Activated CD4-positive, alpha-beta memory T cell treated with anti-CD3 and anti-CD28 coated beads, Interleukin-2, amount 10 ng/mL, durations not matched to agents 7 days and 5 days (primary cell): ENCODE measurements at regions of chr14 and their contacts with region 1.

Region 1: DNA sequence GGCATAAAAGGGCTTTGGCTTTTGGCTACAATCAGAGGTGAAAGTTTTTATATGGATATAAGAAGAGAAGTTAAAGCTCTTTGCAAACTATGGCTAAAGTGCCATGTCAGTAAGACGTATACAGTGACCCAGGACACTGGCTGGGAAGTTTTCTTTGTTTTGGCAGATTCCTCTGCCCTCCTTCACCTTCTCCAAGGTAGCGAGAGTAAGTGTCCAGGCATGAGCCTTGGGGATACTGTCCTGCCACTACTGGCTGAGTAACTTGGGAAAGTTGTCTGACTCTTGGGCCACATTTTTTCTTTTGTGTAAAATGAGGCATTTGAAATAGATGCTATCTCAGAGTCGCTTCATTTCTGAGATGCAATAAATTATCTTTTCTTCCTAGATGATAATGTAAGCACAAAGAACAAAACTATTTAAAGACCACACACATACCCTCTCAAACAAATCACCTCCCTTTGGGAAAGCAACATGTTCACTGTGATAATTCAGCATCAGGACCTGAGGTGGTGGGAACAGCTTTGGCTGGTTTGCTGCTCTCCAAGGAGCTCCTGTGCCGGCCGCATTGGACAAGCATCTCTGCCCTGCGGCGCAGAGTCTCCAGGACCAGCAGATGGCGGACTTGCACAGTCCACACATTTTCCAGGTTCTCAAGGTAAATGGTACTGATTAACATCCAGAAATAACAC is 106.3 kb downstream of the PTCSC3 start:
- DNase-seq: peak; percentile 48
- H3K4me3 Mint-ChIP-seq: no peak overlapping the region
- H3K27ac Mint-ChIP-seq: no peak overlapping the region
- H3K4me1 Mint-ChIP-seq: no peaks in the 10 kb centered on the region
- H3K27me3 Mint-ChIP-seq: no peaks in the 10 kb centered on the region

Region 2: GRCh38 chr14:35818346-35819115 is 251.6 kb before region 1 on chr14:
- CTCF ChIA-PET with region 1: no interaction called
- POLR2A ChIA-PET with region 1: no interaction called
- DNase-seq: no peak
- H3K4me3 Mint-ChIP-seq: no peak overlapping the region
- H3K27ac Mint-ChIP-seq: no peak overlapping the region
- H3K4me1 Mint-ChIP-seq: peaks cover 6% of the 10 kb centered on the region
- H3K27me3 Mint-ChIP-seq: peaks cover 5% of the 10 kb centered on the region

Region 3: GRCh38 chr14:36105401-36105800 is 35.2 kb after region 1 on chr14:
- CTCF ChIA-PET with region 1: no interaction called
- POLR2A ChIA-PET with region 1: no interaction called
- DNase-seq: no peak
- H3K4me3 Mint-ChIP-seq: no peak overlapping the region
- H3K27ac Mint-ChIP-seq: no peak overlapping the region
- H3K4me1 Mint-ChIP-seq: no peaks in the 10 kb centered on the region
- H3K27me3 Mint-ChIP-seq: peaks cover 16% of the 10 kb centered on the region

Region 4: DNA sequence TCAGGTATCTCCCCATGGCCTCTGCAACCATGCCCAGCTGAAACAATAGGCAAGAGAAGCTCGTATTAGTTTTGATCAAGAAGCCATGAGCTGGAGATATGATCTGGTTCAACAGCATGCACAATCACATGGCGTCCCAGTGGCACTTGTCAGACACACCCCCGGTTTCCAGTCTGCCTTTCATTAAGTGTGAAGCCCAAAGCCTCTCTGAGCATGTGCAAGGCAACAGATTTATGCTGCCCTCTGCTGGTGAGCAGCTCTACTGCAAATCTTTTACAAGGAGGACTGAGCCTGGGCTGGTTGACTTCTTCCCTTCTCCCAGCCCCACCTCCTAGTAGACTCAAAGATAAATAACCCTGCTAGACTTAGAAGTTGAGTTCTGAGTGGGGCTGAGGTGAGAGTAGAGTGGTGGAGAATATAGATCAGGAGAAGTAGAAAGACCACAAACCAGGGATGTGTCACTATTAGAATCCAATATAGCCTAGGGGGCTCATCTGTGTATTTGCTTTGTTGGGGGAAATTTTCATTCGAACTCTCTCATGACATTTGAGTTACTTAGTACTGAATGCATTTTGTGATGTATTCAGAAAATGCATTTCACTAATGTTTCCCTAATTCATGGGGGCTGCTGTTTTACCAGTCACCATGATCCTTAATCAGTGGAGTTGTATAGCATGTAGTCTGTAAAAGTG is 304.0 kb after region 1 on chr14:
- CTCF ChIA-PET with region 1: interaction called, 48 read pairs
- POLR2A ChIA-PET with region 1: no interaction called
- DNase-seq: peak; percentile 74
- H3K4me3 Mint-ChIP-seq: no peak overlapping the region
- H3K27ac Mint-ChIP-seq: no peak overlapping the region
- H3K4me1 Mint-ChIP-seq: no peaks in the 10 kb centered on the region
- H3K27me3 Mint-ChIP-seq: no peaks in the 10 kb centered on the region

Region 5: GRCh38 chr14:36604757-36605505 is 534.8 kb after region 1 on chr14:
- CTCF ChIA-PET with region 1: interaction called, 13 read pairs
- POLR2A ChIA-PET with region 1: no interaction called
- DNase-seq: peak; percentile 29
- H3K4me3 Mint-ChIP-seq: no peak overlapping the region
- H3K27ac Mint-ChIP-seq: no peak overlapping the region
- H3K4me1 Mint-ChIP-seq: no peaks in the 10 kb centered on the region
- H3K27me3 Mint-ChIP-seq: peaks cover 3% of the 10 kb centered on the region